CD4-positive, alpha-beta T cell (primary cell): ENCODE measurements at regions of chr15 and their contacts with region 1.

Region 1: GRCh38 chr15:75201609-75202250 is at the start of gene C15orf39:
- DNase-seq: peak; percentile 45 to 89 (median 69)
- ATAC-seq: peak; percentile 53
- H3K4me3 ChIP-seq: peak within 1 kb of the TSS; percentile 73
- H3K4me3 Mint-ChIP-seq: peak within 1 kb of the TSS; percentile 96
- H3K27ac ChIP-seq: peak within 1 kb of the TSS; percentile 44 to 88
- H3K27ac Mint-ChIP-seq: peak within 1 kb of the TSS; percentile 96
- H3K4me1 ChIP-seq: peaks cover 57% of the 10 kb centered on the region
- H3K4me1 Mint-ChIP-seq: peaks cover 37% of the 10 kb centered on the region
- H3K27me3 ChIP-seq: no peaks in the 10 kb centered on the region
- H3K27me3 Mint-ChIP-seq: no peaks in the 10 kb centered on the region
- CTCF ChIP-seq: peak; percentile 80
- total RNA-seq, gene C15orf39: 41.6 to 42.1 TPM

Region 2: DNA sequence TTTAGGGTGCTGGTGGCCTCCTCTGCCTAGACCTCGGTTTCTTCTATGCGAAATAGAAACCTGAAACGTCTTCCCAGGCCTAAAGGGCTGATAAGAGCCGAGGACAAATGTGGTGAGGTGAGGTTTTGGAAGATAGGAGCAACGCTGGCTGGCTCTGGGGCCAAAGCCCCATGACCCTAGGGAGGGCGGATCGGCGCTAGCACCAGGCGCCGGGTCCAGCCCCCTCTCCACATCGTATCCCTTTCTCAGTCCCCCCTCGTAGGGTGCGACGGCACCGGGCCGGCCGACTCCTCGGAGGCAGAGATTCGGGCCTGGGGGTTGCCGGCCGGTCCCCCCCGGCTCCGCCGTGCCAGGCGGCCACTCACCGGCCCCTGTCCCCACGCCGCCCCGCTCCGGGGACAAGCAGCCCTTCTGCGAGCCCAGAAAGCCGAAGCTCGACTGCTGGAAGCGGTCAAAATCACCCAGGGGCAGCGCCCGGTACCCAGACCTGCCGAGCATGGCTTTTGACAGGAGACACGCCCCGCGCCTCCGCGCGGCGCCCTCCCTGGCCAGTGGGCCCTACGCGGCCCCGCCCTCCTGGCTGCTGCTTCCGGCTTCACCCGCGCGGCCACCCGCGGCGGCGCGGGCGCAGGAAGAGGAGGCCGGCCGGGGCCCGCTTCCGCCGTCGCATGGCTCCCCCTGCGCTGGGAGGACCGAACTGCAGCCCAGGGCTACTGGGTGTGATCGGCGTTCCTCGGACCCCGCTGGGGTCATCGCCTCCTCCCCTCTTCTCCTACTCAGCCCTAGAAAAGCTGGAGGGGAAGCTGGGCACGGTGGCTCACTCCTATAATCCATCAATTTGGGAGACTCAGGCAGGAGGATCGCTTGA is 1209.8 kb before region 1 on chr15 and contains the start of gene STOML1:
- CTCF ChIA-PET with region 1: no interaction called
- POLR2A ChIA-PET with region 1: no interaction called
- intact Hi-C with region 1: loop called in 1 of 2 experiments (anchors 10 kb)
- DNase-seq: peak; percentile 85 to 98 (median 94)
- ATAC-seq: peak; percentile 74
- H3K4me3 ChIP-seq: peak within 1 kb of the TSS; percentile 71
- H3K4me3 Mint-ChIP-seq: peak within 1 kb of the TSS; percentile 82
- H3K27ac ChIP-seq: peak within 1 kb of the TSS in 1 of 2 donors; percentile 47
- H3K27ac Mint-ChIP-seq: peak within 1 kb of the TSS; percentile 85
- H3K4me1 ChIP-seq: peaks cover 48% of the 10 kb centered on the region
- H3K4me1 Mint-ChIP-seq: peaks cover 51% of the 10 kb centered on the region
- H3K27me3 ChIP-seq: no peaks in the 10 kb centered on the region
- H3K27me3 Mint-ChIP-seq: no peaks in the 10 kb centered on the region
- CTCF ChIP-seq: peak; percentile 83
- total RNA-seq, gene STOML1: 4.6 to 5.3 TPM

Region 3: DNA sequence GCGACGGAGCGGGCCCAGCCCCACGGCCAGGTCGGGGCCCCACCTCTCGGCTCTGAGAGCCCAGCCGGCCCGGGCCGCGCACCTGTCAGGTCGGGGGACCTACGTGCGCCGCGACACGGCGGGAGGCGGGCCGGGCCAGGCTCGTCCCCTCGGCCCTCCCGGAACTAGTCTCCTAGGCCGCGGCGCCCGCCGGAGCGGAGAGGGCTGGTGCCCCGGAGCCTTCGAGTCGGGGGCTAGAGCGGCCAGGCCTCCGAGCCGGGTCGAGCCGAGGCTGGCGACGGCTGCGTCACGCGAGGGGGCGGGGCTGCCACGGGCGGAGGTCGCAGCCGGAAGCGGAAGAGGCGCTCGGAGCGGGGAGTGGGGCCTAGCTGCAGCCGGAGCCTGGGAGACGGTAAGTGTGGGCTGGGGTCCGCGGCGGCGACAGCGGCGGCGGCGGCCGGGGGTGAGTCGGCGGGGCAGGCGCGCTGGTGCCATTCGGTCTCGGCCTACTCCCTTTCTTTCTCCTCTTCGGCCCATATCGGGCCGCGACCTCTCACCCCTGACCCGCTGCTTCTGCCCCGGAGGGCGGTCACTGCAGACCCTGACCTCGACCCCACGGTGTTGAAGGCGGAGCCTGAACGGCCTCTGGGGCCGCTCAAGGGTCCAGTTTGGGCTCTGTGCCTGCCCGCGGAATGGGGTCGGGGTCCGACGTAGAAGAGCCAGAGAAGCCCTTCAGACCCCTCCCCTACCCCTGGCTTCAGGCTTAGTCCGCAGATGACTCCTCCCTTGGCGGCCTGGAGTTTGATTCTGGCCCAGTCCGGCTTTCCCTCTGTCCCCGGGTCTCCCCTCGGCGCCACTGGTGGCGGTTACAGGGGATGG is 586.0 kb before region 1 on chr15 and contains the start of gene CLK3:
- CTCF ChIA-PET with region 1: no interaction called
- POLR2A ChIA-PET with region 1: no interaction called
- intact Hi-C with region 1: loop called in 1 of 2 experiments (anchors 5 kb)
- DNase-seq: peak; percentile 92 to 99 (median 97)
- ATAC-seq: peak; percentile 70
- H3K4me3 ChIP-seq: peak within 1 kb of the TSS; percentile 100
- H3K4me3 Mint-ChIP-seq: peak within 1 kb of the TSS; percentile 94
- H3K27ac ChIP-seq: peak within 1 kb of the TSS; percentile 95 to 98
- H3K27ac Mint-ChIP-seq: peak within 1 kb of the TSS; percentile 99
- H3K4me1 ChIP-seq: peaks cover 63% of the 10 kb centered on the region
- H3K4me1 Mint-ChIP-seq: peaks cover 42% of the 10 kb centered on the region
- H3K27me3 ChIP-seq: no peaks in the 10 kb centered on the region
- H3K27me3 Mint-ChIP-seq: no peaks in the 10 kb centered on the region
- CTCF ChIP-seq: no peak
- total RNA-seq, gene CLK3: 275 to 293 TPM

Region 4: GRCh38 chr15:74781431-74782258 is 420.1 kb before region 1 on chr15 and contains the start of gene CSK:
- CTCF ChIA-PET with region 1: no interaction called
- POLR2A ChIA-PET with region 1: no interaction called
- intact Hi-C with region 1: loop called (anchors 10 kb)
- DNase-seq: peak; percentile 59 to 94 (median 80)
- ATAC-seq: peak; percentile 59
- H3K4me3 ChIP-seq: peak within 1 kb of the TSS; percentile 100
- H3K4me3 Mint-ChIP-seq: peak within 1 kb of the TSS; percentile 90
- H3K27ac ChIP-seq: peak within 1 kb of the TSS; percentile 84 to 93
- H3K27ac Mint-ChIP-seq: peak within 1 kb of the TSS; percentile 94
- H3K4me1 ChIP-seq: peaks cover 88% of the 10 kb centered on the region
- H3K4me1 Mint-ChIP-seq: peaks cover 65% of the 10 kb centered on the region
- H3K27me3 ChIP-seq: no peaks in the 10 kb centered on the region
- H3K27me3 Mint-ChIP-seq: no peaks in the 10 kb centered on the region
- CTCF ChIP-seq: peak; percentile 59
- total RNA-seq, gene CSK: 114 to 118 TPM

Region 5: GRCh38 chr15:74956648-74957300 is 245.0 kb before region 1 on chr15 and contains the start of gene RPP25:
- CTCF ChIA-PET with region 1: interaction called, 3 read pairs
- POLR2A ChIA-PET with region 1: interaction called, 8 read pairs
- intact Hi-C with region 1: loop called (anchors 2 kb)
- DNase-seq: peak; percentile 24 to 78 (median 62)
- ATAC-seq: peak; percentile 84
- H3K4me3 ChIP-seq: peak within 1 kb of the TSS; percentile 60
- H3K4me3 Mint-ChIP-seq: peak within 1 kb of the TSS; percentile 83
- H3K27ac ChIP-seq: no peak within 1 kb of the TSS
- H3K27ac Mint-ChIP-seq: no peak within 1 kb of the TSS
- H3K4me1 ChIP-seq: peaks cover 41% of the 10 kb centered on the region
- H3K4me1 Mint-ChIP-seq: peaks cover 21% of the 10 kb centered on the region
- H3K27me3 ChIP-seq: peaks cover 36 to 37% of the 10 kb centered on the region in 2 experiments
- H3K27me3 Mint-ChIP-seq: peaks cover 35% of the 10 kb centered on the region
- CTCF ChIP-seq: no peak
- total RNA-seq, gene RPP25: 0.14 to 0.45 TPM

Region 6: DNA sequence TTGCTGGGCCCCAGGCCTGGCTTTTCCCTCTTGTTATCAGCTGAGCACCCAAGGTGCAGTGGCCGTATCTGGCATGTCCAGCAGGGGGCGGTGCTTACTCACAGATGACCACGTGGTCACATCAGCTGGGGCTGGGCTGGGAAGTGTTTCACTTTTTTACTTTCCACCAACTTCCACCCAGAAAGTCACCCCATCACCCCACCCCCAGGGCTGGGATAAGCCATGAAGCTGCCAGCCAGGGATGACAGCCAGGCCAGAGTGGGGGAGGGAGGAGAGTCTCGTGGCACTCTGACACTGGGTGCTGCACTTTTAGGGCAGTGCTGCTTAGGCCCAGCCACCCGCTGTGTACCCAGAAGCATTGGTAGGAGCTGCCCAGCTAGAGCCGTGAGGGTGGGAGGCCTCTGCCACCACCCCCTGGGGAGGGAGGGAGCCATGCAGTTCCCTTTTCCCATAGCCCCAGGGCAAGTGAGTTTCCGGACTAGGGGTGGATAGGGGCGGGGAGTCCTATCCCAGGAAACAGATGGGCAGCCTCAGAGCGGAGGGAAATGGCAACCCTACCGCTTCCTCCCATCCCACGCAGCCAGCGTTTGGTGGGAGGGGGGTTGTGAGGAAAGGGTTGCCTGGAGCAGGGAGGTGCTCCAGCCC is 172.2 kb before region 1 on chr15:
- CTCF ChIA-PET with region 1: interaction called, 41 read pairs
- POLR2A ChIA-PET with region 1: interaction called, 15 read pairs
- intact Hi-C with region 1: loop called (anchors 1 kb)
- DNase-seq: peak; percentile 79 to 94 (median 86)
- ATAC-seq: peak; percentile 97
- H3K4me3 ChIP-seq: no peak overlapping the region
- H3K4me3 Mint-ChIP-seq: peak overlapping the region; percentile 49
- H3K27ac ChIP-seq: no peak overlapping the region
- H3K27ac Mint-ChIP-seq: peak overlapping the region; percentile 31
- H3K4me1 ChIP-seq: peaks cover 24% of the 10 kb centered on the region
- H3K4me1 Mint-ChIP-seq: peaks cover 17% of the 10 kb centered on the region
- H3K27me3 ChIP-seq: no peaks in the 10 kb centered on the region
- H3K27me3 Mint-ChIP-seq: no peaks in the 10 kb centered on the region
- CTCF ChIP-seq: peak; percentile 93

Region 7: DNA sequence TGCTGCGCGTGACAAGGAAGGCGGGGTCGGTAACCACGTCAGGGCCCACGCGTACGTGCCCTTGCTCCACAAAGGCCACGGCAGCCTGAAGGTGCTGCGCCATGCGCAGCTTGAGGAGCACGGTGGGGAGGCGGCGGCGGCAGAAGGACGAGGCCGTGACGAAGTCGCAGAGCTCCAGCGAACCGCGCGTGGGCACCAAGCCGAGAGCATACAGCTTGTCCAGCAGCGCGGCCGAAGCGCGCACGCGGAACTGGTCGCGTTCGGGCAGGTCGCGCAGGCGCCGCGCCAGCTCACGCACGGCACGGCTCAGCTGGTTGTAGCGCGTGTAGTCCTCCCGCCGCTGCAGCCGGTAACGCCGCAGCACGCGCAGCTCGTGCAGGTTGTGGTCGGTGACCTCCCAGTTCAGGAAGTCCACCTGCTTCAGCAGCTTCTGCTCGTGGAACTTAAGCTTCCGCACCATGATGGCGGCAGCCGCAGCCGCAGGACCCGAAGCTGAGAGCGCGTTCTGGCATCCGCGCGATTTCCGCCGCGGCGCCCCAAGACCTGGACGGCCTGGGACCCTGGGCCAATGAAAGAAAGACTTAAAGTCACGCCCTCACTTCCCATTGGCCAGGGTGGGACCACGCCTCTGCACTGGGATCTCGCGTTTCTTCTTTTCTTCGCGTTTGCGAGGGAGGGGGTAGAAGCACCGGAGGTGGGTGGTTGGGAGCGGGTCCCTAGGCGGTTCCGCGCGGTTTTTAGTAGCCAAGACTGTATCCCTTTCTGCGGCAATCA is 438.2 kb after region 1 on chr15 and contains the start of gene IMP3:
- CTCF ChIA-PET with region 1: no interaction called
- POLR2A ChIA-PET with region 1: interaction called, 3 read pairs
- intact Hi-C with region 1: loop called in 1 of 2 experiments (anchors 2 kb)
- DNase-seq: peak; percentile 84 to 97 (median 90)
- ATAC-seq: peak; percentile 90
- H3K4me3 ChIP-seq: peak within 1 kb of the TSS; percentile 95
- H3K4me3 Mint-ChIP-seq: peak within 1 kb of the TSS; percentile 89
- H3K27ac ChIP-seq: peak within 1 kb of the TSS; percentile 92
- H3K27ac Mint-ChIP-seq: peak within 1 kb of the TSS; percentile 85
- H3K4me1 ChIP-seq: peaks cover 56% of the 10 kb centered on the region
- H3K4me1 Mint-ChIP-seq: peaks cover 35% of the 10 kb centered on the region
- H3K27me3 ChIP-seq: no peaks in the 10 kb centered on the region
- H3K27me3 Mint-ChIP-seq: no peaks in the 10 kb centered on the region
- CTCF ChIP-seq: no peak
- total RNA-seq, gene IMP3: 48.4 to 50.4 TPM